ENCODE measurements at regions of chr14 and their contacts with region 1.

Region 1: GRCh38 chr14:105414456-105415371 is 4.9 kb upstream of the MTA1 start:
- DNase-seq: peak; percentile 72
- H3K4me3 ChIP-seq: peak overlapping the region; percentile 10 to 44 (median 35)
- H3K27ac ChIP-seq: no peak overlapping the region
- H3K4me1 ChIP-seq: peaks cover 11% of the 10 kb centered on the region
- H3K27me3 ChIP-seq: peaks cover 6% of the 10 kb centered on the region in 2 experiments
- CTCF ChIP-seq: peak; percentile 65 to 71
- POLR2A ChIP-seq: no peak

Region 2: GRCh38 chr14:105300792-105301533 is 113.8 kb before region 1 on chr14 and contains the start of gene BRF1:
- CTCF ChIA-PET with region 1: no interaction called
- POLR2A ChIA-PET with region 1: no interaction called
- dilution Hi-C with region 1: no loop called
- intact Hi-C with region 1: loop called (anchors 10 kb)
- DNase-seq: peak; percentile 95
- H3K4me3 ChIP-seq: peak within 1 kb of the TSS; percentile 25 to 79 (median 54)
- H3K27ac ChIP-seq: peak within 1 kb of the TSS; percentile 62
- H3K4me1 ChIP-seq: peaks cover 9% of the 10 kb centered on the region
- H3K27me3 ChIP-seq: no peaks in the 10 kb centered on the region
- CTCF ChIP-seq: no peak
- POLR2A ChIP-seq: peak; percentile 39
- total RNA-seq, gene BRF1: 37.9 and 47.2 TPM in 2 replicates

Region 3: GRCh38 chr14:105368965-105369652 is 45.6 kb before region 1 on chr14:
- CTCF ChIA-PET with region 1: interaction called, 12 read pairs
- POLR2A ChIA-PET with region 1: no interaction called
- dilution Hi-C with region 1: no loop called
- intact Hi-C with region 1: no loop called
- DNase-seq: no peak
- H3K4me3 ChIP-seq: no peak overlapping the region
- H3K27ac ChIP-seq: no peak overlapping the region
- H3K4me1 ChIP-seq: no peaks in the 10 kb centered on the region
- H3K27me3 ChIP-seq: no peaks in the 10 kb centered on the region
- CTCF ChIP-seq: no peak
- POLR2A ChIP-seq: no peak

Region 4: DNA sequence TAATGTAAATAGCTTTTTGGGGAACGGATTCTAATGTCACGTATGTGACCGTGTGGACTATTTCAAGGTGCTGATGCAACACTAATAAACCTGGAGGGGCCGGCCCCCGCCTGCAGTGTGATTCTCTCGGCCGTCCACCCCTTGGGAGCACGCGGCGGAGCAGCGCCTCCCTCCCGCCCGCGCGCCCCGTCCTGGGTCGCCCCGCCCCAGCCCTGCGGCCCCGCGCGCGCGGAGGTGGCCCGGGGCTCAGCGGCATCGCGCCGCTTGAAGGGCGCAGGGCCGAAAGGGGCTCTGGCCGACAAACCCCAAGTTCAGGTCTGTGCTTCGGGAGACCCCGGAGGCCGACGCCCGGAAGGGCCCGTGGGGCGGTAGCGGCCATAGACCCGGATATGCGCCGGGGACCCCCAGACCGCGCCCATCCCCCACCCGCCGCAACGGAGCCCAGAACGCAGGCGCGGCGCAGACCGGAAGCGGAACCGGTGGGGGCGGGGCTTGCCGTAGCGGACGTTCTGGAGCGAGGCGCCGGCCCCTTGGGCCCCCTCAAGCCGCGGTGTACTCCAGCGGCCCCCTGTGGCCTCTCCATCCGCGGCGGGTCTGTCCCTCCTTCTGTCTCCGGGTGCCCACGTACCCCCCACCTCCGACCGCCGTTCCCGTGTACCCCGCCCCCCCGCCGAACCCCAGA is 16.5 kb before region 1 on chr14 and contains the start of gene TEX22:
- CTCF ChIA-PET with region 1: interaction called, 4 read pairs
- POLR2A ChIA-PET with region 1: interaction called, 3 read pairs
- dilution Hi-C with region 1: no loop called
- intact Hi-C with region 1: loop called (anchors 2 kb)
- DNase-seq: peak; percentile 79
- H3K4me3 ChIP-seq: peak within 1 kb of the TSS; percentile 51 to 67 (median 62)
- H3K27ac ChIP-seq: peak within 1 kb of the TSS; percentile 60
- H3K4me1 ChIP-seq: peaks cover 21% of the 10 kb centered on the region
- H3K27me3 ChIP-seq: no peaks in the 10 kb centered on the region
- CTCF ChIP-seq: peak in 1 of 2 donors; percentile 37
- POLR2A ChIP-seq: peak; percentile 89
- total RNA-seq, gene TEX22: 1.1 and 2.1 TPM in 2 replicates

Region 5: DNA sequence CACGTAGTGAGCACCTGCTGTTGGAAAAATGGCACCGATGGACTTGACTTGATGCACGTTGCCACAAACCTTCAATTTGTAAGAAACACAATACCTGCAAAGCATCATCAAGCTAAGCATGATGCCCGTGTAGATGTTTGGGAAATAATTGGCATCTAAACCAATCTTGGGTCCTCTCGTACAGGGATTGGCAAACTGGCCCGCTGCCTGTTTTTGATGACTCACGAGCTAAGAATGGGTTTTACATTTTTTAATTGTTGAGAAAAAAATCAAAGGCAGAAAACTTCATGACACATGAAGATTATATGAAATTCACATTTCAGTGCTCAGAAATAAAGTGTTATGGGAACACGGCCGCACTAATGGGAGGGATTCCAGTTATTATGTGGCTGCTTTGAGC is 15.8 kb after region 1 on chr14:
- CTCF ChIA-PET with region 1: interaction called, 7 read pairs
- POLR2A ChIA-PET with region 1: interaction called, 4 read pairs
- dilution Hi-C with region 1: no loop called
- intact Hi-C with region 1: loop called (anchors 2 kb)
- DNase-seq: peak; percentile 90
- H3K4me3 ChIP-seq: no peak overlapping the region
- H3K27ac ChIP-seq: peak overlapping the region; percentile 86
- H3K4me1 ChIP-seq: peaks cover 34% of the 10 kb centered on the region
- H3K27me3 ChIP-seq: no peaks in the 10 kb centered on the region
- CTCF ChIP-seq: no peak
- POLR2A ChIP-seq: peak; percentile 20

Region 6: DNA sequence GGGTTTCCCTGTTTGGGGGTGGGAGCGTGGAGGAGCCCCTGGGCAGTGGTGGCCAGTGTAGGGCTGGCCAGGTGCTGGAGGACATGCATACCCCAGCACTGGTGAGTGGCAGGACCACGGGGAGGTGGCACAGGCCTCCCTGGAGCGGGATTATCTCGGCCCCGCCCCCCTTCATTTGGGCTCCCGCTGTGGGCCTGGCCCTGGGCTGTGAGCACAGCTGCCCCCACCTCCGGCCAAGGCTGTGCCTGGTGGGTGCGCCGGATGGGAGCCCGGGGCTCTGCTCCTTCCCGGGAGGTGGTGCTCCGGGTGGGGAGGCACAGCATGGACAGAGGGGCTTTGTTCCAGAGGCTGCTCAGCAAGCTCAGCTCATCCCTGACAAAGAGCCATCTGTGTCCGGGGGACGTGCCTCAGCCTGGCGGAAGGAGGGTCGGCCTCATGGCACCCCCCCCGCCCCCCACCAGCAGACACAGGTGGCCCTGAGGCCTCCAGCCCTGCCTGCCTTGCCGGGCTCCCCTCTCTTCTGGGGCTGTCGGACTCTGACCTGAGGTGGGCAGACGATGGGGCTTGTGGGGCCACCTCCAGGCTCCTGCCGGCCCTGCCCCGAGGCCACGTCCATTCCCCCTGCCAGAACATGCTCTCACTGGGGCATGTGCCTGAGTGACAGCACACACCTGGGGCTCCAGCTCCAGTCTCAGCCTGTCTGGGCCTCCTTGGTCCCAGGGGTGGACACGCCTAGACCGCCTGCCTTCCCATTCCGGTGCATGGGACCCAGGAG is 84.7 kb after region 1 on chr14:
- CTCF ChIA-PET with region 1: no interaction called
- POLR2A ChIA-PET with region 1: no interaction called
- dilution Hi-C with region 1: no loop called
- intact Hi-C with region 1: no loop called
- DNase-seq: no peak
- H3K4me3 ChIP-seq: no peak overlapping the region
- H3K27ac ChIP-seq: no peak overlapping the region
- H3K4me1 ChIP-seq: no peaks in the 10 kb centered on the region
- H3K27me3 ChIP-seq: no peaks in the 10 kb centered on the region
- CTCF ChIP-seq: no peak
- POLR2A ChIP-seq: no peak

Region 7: DNA sequence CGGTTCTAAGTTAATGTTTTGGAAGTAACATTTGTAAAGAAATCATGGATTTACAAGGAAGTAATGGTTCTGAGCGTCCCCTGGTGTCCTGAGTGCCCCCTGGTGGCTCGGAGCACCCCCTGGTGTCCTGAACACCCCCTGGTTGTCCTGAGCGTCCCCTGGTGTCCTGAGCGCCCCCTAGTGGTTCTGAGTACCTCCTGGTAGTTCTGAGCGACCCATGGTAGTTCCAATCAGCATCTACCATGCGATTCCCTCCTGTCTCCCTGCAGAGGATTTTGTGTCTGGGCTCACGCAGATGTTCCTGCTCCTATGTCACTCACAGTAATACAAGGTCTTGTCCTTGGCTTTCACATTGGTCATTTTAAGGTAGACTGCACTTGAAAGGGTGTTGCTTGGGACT is 1464.5 kb after region 1 on chr14:
- CTCF ChIA-PET with region 1: no interaction called
- POLR2A ChIA-PET with region 1: no interaction called
- dilution Hi-C with region 1: no loop called
- intact Hi-C with region 1: no loop called
- DNase-seq: no peak
- H3K4me3 ChIP-seq: no peak overlapping the region
- H3K27ac ChIP-seq: no peak overlapping the region
- H3K4me1 ChIP-seq: no peaks in the 10 kb centered on the region
- H3K27me3 ChIP-seq: no peaks in the 10 kb centered on the region
- CTCF ChIP-seq: peak in 1 of 2 donors; percentile 19
- POLR2A ChIP-seq: no peak